HAP-1 (cell line): ENCODE measurements at regions of chr10 and their contacts with region 1.

Region 1: DNA sequence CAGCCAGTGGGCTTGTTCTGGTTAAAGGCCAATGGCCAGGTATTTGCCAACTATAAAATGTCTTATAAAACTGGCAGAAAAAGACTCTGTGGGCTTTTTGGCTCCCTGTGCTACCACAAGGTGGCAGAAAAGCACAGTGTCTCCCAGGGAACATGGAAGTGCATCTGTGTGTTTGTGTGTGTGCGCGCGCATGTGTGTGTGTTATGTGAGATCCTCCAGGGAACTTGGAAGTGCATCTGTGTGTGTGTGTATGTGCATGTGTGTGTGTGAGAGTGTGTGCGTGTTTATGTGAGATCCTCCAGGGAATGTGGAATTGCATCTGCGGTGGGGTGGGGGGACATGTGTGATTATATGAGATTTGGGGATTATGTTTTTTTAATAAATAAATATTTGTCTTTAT is 30.2 kb upstream of the ABI1 start:
- DNase-seq: peak; percentile 71 to 88
- H3K4me3 ChIP-seq: no peak overlapping the region
- H3K4me1 ChIP-seq: peaks cover 12% of the 10 kb centered on the region
- H3K27me3 ChIP-seq: no peaks in the 10 kb centered on the region

Region 2: GRCh38 chr10:27355918-27356573 is 465.1 kb after region 1 on chr10:
- in situ Hi-C with region 1: loop called (anchors 5 kb)
- DNase-seq: no peak
- H3K4me3 ChIP-seq: no peak overlapping the region
- H3K4me1 ChIP-seq: no peaks in the 10 kb centered on the region
- H3K27me3 ChIP-seq: no peaks in the 10 kb centered on the region